Mammary epithelial cell (primary cell): ENCODE measurements at regions of chr5 and their contacts with region 1.

Region 1: DNA sequence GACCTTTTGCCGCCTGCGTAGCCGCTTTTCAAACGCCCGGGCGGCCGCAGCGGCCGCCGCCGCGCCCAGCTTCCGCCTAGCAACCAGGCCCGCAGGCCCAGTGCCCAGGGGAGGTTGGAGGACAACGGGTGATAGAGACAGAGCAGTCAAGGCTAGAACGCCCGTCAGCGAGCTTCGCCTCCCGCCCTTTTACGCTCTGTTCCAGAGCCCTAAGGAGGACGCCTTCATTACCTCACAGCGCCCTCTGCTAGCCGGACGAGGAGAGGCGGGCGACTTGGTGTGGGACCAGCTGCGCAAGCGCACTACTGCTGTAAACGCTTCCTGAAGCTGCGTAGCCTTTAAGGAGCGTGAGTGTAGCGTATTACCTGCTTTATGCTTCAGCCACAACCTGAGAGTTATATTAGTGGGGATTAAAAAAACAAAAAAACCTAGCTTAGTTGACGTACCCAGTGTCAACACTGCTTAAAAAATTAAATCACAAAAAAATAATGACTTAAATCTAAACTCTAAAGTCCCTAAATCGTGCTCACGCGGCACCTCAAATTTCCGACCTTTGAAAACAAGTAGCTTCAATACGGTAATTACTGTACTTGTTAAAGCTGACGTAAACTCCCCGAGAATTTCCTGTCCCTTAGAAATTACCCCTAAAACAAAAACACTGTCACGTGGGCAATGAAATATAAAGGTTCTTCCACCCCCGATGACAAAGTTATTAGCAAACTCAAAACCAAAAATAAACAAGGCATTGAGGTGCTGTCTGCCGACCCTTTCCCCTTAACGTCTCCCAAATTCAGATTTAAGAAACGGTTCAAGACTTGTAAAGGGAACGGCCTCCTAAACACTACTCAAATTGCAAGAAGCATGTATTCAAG is at the start of gene CEP120:
- DNase-seq: peak; percentile 99
- H3K4me3 ChIP-seq: peak within 1 kb of the TSS; percentile 74 to 85 (median 83)
- H3K27ac ChIP-seq: peak within 1 kb of the TSS; percentile 93
- H3K4me1 ChIP-seq: peaks cover 15% of the 10 kb centered on the region
- H3K27me3 ChIP-seq: no peaks in the 10 kb centered on the region
- CTCF ChIP-seq: peak; percentile 73 to 80
- total RNA-seq, gene CEP120: 20.7 to 24.6 TPM

Region 2: GRCh38 chr5:123294544-123294943 is 129.0 kb before region 1 on chr5:
- CTCF ChIA-PET with region 1: no interaction called
- dilution Hi-C with region 1: no loop called
- in situ Hi-C with region 1: no loop called
- intact Hi-C with region 1: no loop called
- DNase-seq: no peak
- H3K4me3 ChIP-seq: no peak overlapping the region
- H3K27ac ChIP-seq: no peak overlapping the region
- H3K4me1 ChIP-seq: no peaks in the 10 kb centered on the region
- H3K27me3 ChIP-seq: no peaks in the 10 kb centered on the region
- CTCF ChIP-seq: no peak

Region 3: DNA sequence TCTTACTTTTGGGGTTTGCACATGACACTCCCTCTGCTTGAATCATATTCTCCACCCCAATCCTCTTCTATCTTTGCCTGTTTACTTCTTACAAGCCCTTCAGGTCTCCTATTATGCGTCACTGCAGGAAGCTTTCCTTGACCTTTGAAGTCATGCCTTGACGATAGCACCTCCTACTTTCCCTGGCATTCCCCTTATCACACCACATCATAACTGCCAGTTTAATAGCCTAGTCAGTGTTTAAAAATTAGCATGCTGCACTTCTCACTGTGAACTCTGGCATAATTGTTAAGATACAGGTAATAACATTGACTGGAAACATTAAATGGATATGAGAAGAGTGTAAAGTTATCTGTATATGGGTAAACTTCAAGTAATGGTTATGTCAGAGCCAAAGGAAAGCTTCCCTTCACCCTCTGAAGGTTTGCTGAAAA is 36.8 kb after region 1 on chr5:
- CTCF ChIA-PET with region 1: no interaction called
- dilution Hi-C with region 1: no loop called
- in situ Hi-C with region 1: no loop called
- intact Hi-C with region 1: no loop called
- DNase-seq: peak; percentile 16
- H3K4me3 ChIP-seq: no peak overlapping the region
- H3K27ac ChIP-seq: no peak overlapping the region
- H3K4me1 ChIP-seq: no peaks in the 10 kb centered on the region
- H3K27me3 ChIP-seq: no peaks in the 10 kb centered on the region
- CTCF ChIP-seq: no peak

Region 4: GRCh38 chr5:123476731-123477130 is 53.2 kb after region 1 on chr5:
- CTCF ChIA-PET with region 1: no interaction called
- dilution Hi-C with region 1: no loop called
- in situ Hi-C with region 1: no loop called
- intact Hi-C with region 1: no loop called
- DNase-seq: no peak
- H3K4me3 ChIP-seq: no peak overlapping the region
- H3K27ac ChIP-seq: no peak overlapping the region
- H3K4me1 ChIP-seq: no peaks in the 10 kb centered on the region
- H3K27me3 ChIP-seq: no peaks in the 10 kb centered on the region
- CTCF ChIP-seq: no peak

Region 5: DNA sequence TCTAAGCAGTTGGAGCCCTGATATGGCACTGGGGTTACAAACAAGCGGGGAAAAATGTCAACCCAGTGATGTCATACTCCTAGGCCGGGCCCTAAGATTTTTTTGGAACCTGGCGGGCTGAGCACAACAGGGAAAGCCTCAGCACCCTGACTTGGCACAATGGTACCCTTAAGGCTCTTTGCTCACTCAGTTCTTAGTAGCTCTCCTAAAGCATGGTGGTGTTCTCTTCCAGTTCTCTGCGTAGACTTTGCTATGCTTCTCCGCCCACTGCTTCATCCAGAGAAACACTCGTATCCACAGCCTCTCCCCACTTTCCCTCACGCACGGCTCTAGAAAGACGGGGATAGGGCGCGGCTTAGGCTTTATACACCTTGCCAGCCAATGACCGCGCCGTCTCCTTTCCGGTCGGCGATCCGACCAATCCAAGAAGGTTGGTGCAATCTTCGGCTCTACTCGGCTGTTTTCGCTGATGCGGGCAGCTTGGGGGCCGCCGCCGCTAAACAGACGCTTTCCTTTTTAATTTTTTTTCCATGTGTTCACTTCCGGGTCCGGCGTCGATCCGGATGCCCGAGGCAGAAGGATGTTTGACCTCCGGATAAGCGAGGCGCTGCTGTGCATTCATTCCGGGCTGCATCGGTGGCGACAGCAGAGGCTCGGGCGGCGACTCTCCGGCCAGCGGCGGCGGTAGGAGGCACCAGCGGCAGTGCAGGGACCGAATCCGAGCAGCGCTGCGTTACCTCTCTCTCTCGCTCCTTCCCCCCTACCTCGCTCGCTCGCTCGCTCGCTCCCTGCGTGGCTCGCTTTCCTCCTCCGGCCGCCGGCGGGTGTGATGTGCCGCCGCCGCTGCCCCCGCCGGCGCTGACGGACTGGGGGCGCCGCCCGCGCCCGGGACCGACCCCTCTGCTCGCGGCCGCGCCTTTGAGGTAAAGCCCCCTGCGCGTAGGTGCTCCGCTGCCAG is 88.4 kb after region 1 on chr5 and contains the start of gene CSNK1G3:
- CTCF ChIA-PET with region 1: no interaction called
- dilution Hi-C with region 1: no loop called
- in situ Hi-C with region 1: loop called in 1 of 2 experiments (anchors 10 kb)
- intact Hi-C with region 1: loop called (anchors 1 kb)
- DNase-seq: peak; percentile 97
- H3K4me3 ChIP-seq: peak within 1 kb of the TSS; percentile 62 to 94 (median 92)
- H3K27ac ChIP-seq: peak within 1 kb of the TSS; percentile 89
- H3K4me1 ChIP-seq: peaks cover 17% of the 10 kb centered on the region
- H3K27me3 ChIP-seq: no peaks in the 10 kb centered on the region
- CTCF ChIP-seq: no peak
- total RNA-seq, gene CSNK1G3: 50.6 to 59.2 TPM

Region 6: GRCh38 chr5:123527190-123527589 is 103.7 kb after region 1 on chr5:
- CTCF ChIA-PET with region 1: interaction called, 10 read pairs
- dilution Hi-C with region 1: no loop called
- in situ Hi-C with region 1: no loop called
- intact Hi-C with region 1: no loop called
- DNase-seq: no peak
- H3K4me3 ChIP-seq: no peak overlapping the region
- H3K27ac ChIP-seq: no peak overlapping the region
- H3K4me1 ChIP-seq: no peaks in the 10 kb centered on the region
- H3K27me3 ChIP-seq: no peaks in the 10 kb centered on the region
- CTCF ChIP-seq: no peak

Region 7: GRCh38 chr5:124206540-124206939 is 783.0 kb after region 1 on chr5:
- CTCF ChIA-PET with region 1: no interaction called
- dilution Hi-C with region 1: no loop called
- in situ Hi-C with region 1: no loop called
- intact Hi-C with region 1: no loop called
- DNase-seq: no peak
- H3K4me3 ChIP-seq: no peak overlapping the region
- H3K27ac ChIP-seq: no peak overlapping the region
- H3K4me1 ChIP-seq: no peaks in the 10 kb centered on the region
- H3K27me3 ChIP-seq: no peaks in the 10 kb centered on the region
- CTCF ChIP-seq: no peak